BJ (cell line): ENCODE measurements at regions of chr3 and their contacts with region 1.

Region 1: DNA sequence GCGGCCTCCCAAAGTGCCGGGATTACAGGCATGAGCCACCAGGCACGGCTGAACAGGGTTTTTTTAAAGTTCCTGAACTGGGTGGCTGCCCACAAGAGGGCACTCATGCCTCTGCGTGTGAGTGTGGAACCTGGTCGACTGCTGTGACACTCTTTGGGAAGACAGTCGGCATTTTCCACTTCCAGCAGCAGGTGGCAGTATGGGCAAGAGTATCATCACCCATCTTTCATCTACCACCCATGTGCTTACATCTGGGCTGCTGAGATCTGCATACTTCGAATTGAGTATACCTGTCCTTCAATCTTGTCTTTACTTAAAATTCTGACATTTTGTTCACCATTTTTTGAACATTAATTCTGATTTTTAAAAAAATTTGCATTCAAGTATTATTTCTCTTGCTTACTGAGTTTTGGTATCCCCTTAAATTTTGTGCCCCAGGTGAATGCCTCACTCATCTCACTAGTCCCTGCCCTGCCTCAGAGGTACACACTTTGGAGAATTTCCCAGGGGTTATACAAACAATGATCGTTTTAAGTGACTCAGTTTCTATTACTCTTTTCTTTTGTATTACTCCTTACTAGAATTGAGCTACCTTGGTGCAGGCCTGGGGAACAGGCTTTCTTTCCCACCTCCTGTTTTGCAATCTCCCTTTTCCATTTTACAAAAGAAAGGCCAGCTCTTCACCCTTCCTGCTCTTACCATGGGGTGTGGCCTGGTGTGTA is 11.8 kb downstream of the CLEC3B start:
- DNase-seq: peak; percentile 59
- H3K4me3 ChIP-seq: no peak overlapping the region
- H3K27me3 ChIP-seq: no peaks in the 10 kb centered on the region
- CTCF ChIP-seq: peak; percentile 89

Region 2: DNA sequence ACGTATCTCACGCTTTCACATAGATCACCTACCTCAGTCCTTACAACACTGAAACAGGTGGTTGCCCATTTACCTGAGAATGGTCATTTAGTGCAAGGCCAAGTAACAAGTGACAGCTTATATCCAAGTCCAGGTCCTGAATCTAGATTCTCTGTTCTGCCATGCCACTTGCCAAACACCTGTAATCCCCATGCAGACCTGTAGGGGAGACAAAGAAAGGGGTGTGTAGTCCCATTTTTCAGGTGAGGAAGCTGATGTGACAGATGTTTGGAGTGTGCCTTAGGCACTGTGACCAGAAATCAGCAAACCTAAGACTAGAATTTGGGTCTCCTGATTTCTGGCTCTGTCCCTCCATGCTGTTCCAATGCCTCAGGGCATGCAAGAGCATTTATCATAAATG is 376.7 kb before region 1 on chr3:
- CTCF ChIA-PET with region 1: no interaction called
- POLR2A ChIA-PET with region 1: no interaction called
- DNase-seq: no peak
- H3K4me3 ChIP-seq: no peak overlapping the region
- H3K27me3 ChIP-seq: no peaks in the 10 kb centered on the region
- CTCF ChIP-seq: peak; percentile 21

Region 3: GRCh38 chr3:44913868-44914468 is 123.9 kb before region 1 on chr3:
- CTCF ChIA-PET with region 1: interaction called, 13 read pairs
- POLR2A ChIA-PET with region 1: no interaction called
- DNase-seq: no peak
- H3K4me3 ChIP-seq: no peak overlapping the region
- H3K27me3 ChIP-seq: peaks cover 2% of the 10 kb centered on the region; the same call in 1 of the 2 replicates
- CTCF ChIP-seq: peak; percentile 86

Region 4: GRCh38 chr3:44926172-44926571 is 111.7 kb before region 1 on chr3:
- CTCF ChIA-PET with region 1: no interaction called
- POLR2A ChIA-PET with region 1: no interaction called
- DNase-seq: no peak
- H3K4me3 ChIP-seq: no peak overlapping the region
- H3K27me3 ChIP-seq: no peaks in the 10 kb centered on the region
- CTCF ChIP-seq: no peak

Region 5: DNA sequence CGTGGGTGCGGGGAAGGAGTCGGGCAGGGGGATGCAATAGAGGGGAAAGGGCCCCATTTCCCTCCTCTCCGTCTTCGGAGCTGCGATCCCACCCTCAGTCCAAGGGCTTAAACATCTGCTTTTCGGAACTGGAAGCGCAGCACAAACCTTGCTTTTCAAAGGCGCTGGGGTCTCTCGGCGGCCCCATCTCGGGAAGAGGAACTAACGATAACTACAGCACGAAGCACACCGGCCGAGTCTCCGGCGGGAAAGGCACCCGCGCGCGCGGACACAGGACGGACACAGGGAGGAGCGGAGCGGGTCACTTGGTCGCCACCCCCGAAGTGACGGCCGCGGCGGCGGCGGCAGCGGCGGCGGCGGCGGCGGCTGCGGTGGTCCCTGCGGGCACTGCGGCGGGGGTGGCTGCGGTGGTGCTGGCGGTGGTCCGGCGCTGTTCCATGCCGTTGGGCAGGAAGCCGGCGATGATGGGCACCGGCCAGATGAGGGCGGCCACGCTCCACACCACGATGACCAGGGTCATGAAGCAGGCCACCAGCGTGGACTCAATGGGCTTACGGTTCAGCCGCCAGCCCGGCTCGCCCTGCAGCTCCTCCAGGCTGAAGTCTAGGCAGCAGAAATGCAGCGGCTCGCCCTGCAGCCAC is 187.0 kb after region 1 on chr3:
- CTCF ChIA-PET with region 1: interaction called, 289 read pairs
- POLR2A ChIA-PET with region 1: interaction called, 4 read pairs
- DNase-seq: no peak
- H3K4me3 ChIP-seq: peak overlapping the region; percentile 64
- H3K27me3 ChIP-seq: peaks cover 2% of the 10 kb centered on the region; the same call in 1 of the 2 replicates
- CTCF ChIP-seq: peak; percentile 59

Region 6: GRCh38 chr3:45499529-45499928 is 461.6 kb after region 1 on chr3:
- CTCF ChIA-PET with region 1: interaction called, 81 read pairs
- POLR2A ChIA-PET with region 1: no interaction called
- DNase-seq: no peak
- H3K4me3 ChIP-seq: no peak overlapping the region
- H3K27me3 ChIP-seq: no peaks in the 10 kb centered on the region
- CTCF ChIP-seq: peak; percentile 38

Region 7: DNA sequence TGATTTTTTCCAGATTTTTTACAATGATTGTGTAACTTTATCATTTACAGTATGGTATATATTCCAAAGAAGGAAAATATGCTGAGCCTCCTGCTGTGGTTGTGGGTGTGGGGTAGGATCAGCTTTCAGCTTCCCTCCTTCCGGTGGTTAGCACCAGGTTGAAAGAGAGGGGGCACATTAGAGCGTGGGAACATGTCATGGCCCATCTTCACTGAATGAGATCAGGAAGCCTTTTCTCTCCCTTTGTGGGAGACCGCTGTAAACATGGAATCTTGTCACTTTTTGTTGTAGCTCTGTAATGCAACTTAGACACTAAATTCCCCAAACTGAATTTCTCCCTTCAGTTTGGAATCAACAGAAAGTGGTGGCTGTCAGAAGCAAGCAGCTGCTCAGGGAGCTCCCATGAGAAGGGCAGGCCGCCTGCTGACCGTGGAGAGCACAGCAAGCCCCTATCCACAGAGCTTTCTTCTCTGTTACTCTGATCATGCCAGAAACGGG is 470.0 kb after region 1 on chr3:
- CTCF ChIA-PET with region 1: interaction called, 35 read pairs
- POLR2A ChIA-PET with region 1: no interaction called
- DNase-seq: no peak
- H3K4me3 ChIP-seq: no peak overlapping the region
- H3K27me3 ChIP-seq: no peaks in the 10 kb centered on the region
- CTCF ChIP-seq: peak; percentile 64